Activated T-helper 2 cell treated with anti-CD3 and anti-CD28 coated beads, Interferon-gamma antibody, Interleukin-2, Interleukin-4, amounts not matched to agents 10 μg/mL and 5 μg/mL and 100 μg/mL, durations not matched to agents 14 hours and 24 hours and 36 hours (primary cell): ENCODE measurements at regions of chr14 and their contacts with region 1.

Region 1: GRCh38 chr14:49585803-49586672 is at the start of gene RPS29:
- DNase-seq: peak; percentile 99
- H3K4me3 Mint-ChIP-seq: peak within 1 kb of the TSS; percentile 92
- H3K27ac Mint-ChIP-seq: peak within 1 kb of the TSS; percentile 98
- H3K4me1 Mint-ChIP-seq: peaks cover 33% of the 10 kb centered on the region
- H3K27me3 Mint-ChIP-seq: no peaks in the 10 kb centered on the region
- total RNA-seq, gene RPS29: 1,969 and 2,120 TPM in 2 replicates

Region 2: GRCh38 chr14:49461529-49462401 is 124.3 kb before region 1 on chr14:
- intact Hi-C with region 1: loop called (anchors 5 kb)
- DNase-seq: peak; percentile 33
- H3K4me3 Mint-ChIP-seq: no peak overlapping the region
- H3K27ac Mint-ChIP-seq: no peak overlapping the region
- H3K4me1 Mint-ChIP-seq: no peaks in the 10 kb centered on the region
- H3K27me3 Mint-ChIP-seq: peaks cover 12% of the 10 kb centered on the region

Region 3: DNA sequence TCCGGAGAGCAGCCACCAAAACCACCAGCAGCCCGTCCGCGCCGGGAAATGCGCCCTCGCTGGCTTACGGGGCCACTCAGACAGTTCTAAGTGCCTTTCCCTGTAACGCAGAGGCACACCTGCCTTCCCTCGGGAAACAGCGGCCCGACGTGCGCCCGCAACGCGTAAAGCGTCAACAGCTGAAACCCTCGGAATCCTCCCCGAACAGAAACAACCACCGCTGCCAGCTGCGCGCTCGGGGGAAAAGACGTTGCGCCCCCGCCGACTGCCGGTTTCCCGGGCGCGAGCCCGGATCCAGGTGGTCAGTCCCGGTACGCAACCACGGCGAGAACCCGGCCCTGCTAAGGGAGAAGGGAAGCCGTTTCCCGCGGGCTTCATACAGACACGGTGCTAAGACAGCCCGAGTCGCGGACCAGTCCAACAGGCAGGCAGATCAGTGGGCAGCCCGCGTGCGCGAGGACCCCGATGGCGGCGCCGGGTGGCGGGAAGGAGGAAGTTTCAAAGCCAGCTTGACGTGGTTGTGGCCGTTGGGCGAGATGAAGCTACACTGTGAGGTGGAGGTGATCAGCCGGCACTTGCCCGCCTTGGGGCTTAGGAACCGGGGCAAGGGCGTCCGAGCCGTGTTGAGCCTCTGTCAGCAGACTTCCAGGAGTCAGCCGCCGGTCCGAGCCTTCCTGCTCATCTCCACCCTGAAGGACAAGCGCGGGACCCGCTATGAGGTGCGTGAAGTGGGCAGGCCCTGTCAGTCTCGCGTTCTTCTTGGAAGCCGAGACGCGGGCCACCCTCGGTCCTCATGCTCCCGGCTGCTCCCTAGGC is 12.7 kb after region 1 on chr14 and contains the start of gene LRR1:
- intact Hi-C with region 1: loop called (anchors 1 kb)
- DNase-seq: peak; percentile 84
- H3K4me3 Mint-ChIP-seq: peak within 1 kb of the TSS; percentile 92
- H3K27ac Mint-ChIP-seq: peak within 1 kb of the TSS; percentile 92
- H3K4me1 Mint-ChIP-seq: peaks cover 37% of the 10 kb centered on the region
- H3K27me3 Mint-ChIP-seq: no peaks in the 10 kb centered on the region
- total RNA-seq, gene LRR1: 44.2 and 45.4 TPM in 2 replicates

Region 4: DNA sequence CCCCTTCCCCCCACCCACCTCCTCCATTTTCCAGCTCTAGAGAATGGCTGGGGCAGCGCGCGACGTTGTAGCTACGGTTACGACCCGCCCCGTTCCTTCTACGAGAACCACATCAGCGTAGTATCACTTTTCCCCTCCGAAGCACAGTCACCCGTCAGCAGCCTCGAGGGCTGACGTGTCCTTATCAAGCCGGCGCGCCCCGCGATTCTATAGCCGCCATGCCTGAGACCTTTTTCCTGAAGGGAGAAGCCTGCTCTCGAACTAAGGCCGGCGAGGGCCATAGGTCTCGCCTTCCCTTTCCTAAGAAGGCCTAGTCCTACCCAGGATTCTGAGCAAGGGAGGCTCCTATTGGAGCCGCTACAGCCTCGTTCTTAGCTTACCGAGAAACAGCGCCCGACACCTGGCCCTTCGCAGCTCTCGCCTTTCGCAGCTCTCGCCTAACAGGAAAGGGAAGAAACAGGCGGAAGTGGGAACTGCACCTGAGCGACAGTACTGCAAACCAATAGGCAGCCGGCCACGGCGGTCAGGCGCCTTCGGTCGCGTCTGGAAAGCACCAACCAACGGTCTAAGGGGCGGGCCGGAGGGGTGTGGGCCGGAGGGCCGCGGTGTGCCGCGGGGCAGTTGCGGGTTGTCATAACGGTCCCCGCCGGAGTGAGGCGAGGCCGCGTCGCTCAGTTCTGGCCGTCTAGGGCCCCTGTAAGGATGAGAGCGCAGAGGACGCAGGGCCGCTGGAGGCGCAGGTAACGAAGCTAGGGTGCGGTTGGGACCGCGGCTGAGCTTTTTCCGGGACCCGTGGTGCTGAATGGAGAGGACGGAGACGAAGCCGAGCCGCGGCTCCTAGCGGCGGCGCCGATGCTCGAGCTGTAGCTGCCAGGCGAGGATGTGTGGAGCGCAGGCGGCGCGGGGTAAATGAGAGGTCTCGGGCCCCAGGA is 34.4 kb after region 1 on chr14 and contains the starts of genes MGAT2 and RPL36AL:
- intact Hi-C with region 1: loop called (anchors 1 kb)
- DNase-seq: peak; percentile 96
- H3K4me3 Mint-ChIP-seq: peak within 1 kb of the TSS; percentile 91
- H3K27ac Mint-ChIP-seq: peak within 1 kb of the TSS; percentile 94
- H3K4me1 Mint-ChIP-seq: peaks cover 44% of the 10 kb centered on the region
- H3K27me3 Mint-ChIP-seq: no peaks in the 10 kb centered on the region
- total RNA-seq, gene MGAT2: 57.0 and 57.9 TPM in 2 replicates
- total RNA-seq, gene RPL36AL: 278 and 292 TPM in 2 replicates

Region 5: DNA sequence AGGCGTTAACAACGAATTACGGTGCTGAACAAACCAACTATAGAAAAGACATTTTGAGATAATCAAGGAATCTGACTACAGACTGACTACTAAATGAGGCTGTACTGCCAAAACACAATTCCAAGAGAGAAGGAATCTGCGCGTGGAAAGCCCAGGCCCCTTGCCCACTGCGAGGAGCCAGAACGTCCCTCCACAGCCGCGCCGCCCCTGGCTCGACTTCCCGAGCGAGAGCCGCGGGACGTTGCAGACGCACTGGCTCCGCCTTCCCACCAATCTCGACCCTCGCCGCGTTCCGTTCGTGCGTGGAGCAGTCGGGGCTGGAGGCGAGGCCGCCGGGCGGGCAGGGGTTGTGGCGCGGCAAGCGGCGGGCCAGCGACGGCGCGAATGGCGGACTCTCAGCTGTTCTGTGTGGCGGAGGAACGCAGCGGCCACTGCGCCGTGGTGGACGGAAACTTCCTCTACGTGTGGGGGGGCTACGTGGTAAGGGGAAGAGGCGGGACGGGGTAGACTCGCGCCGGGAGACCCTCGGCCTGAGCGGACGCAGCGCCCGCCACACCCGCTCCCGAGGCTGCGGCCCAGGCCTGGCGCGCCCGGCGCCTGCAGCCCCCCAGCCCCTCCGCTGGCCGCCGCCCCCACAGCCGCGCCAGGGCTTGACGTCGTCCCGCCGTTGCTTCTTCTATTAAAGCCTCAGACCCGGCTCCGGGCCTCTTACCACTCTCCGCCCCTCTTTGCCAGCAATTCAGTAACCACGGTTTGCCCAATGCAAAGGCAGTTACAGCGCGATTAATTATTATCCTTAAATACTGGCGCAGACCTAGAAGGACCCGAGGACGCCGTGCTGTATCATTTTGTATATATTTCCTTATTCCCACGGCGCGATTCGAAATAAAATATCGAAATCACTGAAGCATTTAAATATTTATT is 107.0 kb after region 1 on chr14 and contains the start of gene KLHDC1:
- intact Hi-C with region 1: loop called (anchors 5 kb)
- DNase-seq: peak; percentile 68
- H3K4me3 Mint-ChIP-seq: peak within 1 kb of the TSS; percentile 84
- H3K27ac Mint-ChIP-seq: peak within 1 kb of the TSS; percentile 84
- H3K4me1 Mint-ChIP-seq: peaks cover 30% of the 10 kb centered on the region
- H3K27me3 Mint-ChIP-seq: no peaks in the 10 kb centered on the region
- total RNA-seq, gene KLHDC1: 0.78 and 0.96 TPM in 2 replicates

Region 6: DNA sequence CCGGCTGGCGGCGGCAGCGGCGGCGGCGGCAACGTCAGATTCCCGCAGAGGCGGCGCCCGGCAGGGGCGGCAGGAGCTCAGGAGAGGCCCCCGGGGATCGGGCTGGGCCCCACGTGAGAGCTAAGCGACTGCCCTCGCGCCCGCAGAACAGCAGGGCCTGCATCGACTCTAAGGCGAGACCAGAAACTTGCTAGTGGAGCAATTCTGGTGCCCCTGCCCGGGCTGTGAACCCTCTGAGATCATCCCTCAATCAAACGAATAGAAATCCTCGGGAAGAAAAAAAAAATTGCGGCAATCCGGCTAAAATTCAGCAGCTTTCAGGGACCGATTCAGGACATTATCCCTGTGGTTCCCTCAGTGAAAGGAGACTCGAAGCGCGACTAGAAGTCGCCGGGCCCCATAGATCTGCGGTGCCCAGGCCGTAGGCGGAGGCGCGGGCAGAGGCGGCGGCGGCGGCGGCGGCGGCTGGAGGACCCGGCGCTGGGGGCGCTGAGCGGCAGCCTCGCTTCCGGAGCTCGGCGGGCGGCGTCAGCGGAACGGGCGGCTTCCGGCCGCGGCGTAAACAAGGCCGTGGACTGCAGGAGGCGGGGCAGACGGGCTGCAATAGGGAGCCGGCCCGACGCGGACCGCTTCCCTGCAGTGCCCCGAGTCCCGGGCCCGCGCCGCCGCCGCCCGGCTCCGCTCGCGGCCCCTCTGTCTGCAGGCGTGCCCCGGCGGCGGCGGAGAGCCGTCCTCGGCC is 181.7 kb after region 1 on chr14 and contains the start of gene KLHDC2:
- intact Hi-C with region 1: loop called (anchors 2 kb)
- DNase-seq: peak; percentile 89
- H3K4me3 Mint-ChIP-seq: peak within 1 kb of the TSS; percentile 96
- H3K27ac Mint-ChIP-seq: peak within 1 kb of the TSS; percentile 100
- H3K4me1 Mint-ChIP-seq: peaks cover 31% of the 10 kb centered on the region
- H3K27me3 Mint-ChIP-seq: no peaks in the 10 kb centered on the region
- total RNA-seq, gene KLHDC2: 28.9 and 31.6 TPM in 2 replicates